ENCODE measurements at regions of chr5 and their contacts with region 1.

Region 1: DNA sequence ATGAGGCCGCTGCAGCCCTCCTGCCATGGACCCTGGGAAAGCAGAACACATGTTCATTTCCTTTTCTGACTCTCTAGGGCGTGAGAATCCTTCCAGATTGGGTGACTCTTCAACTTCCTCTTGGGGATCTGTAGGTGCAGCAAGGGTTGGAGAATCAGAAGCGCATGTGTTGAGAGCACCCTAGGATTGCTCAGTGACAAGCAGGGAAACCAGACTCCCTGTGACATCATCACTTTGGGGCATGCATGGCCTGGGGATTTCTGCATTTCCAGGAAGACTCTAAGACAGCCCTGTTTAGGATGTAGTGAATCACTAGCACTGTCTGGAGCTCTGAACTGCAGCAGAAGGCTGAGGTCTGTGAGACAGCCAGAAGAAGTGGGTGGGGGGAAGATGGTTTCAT is 15.1 kb upstream of the LCP2 start:
- DNase-seq: peak in 8 of 14 experiments; percentile 44 to 92 (median 61)
- ATAC-seq: peak; percentile 87
- H3K4me3 ChIP-seq: peak overlapping the region; percentile 6
- H3K4me3 Mint-ChIP-seq: peak overlapping the region; percentile 71
- H3K27ac ChIP-seq: peak overlapping the region; percentile 80 to 83
- H3K27ac Mint-ChIP-seq: peak overlapping the region; percentile 91
- H3K4me1 ChIP-seq: peaks cover 56% of the 10 kb centered on the region
- H3K4me1 Mint-ChIP-seq: peaks cover 87% of the 10 kb centered on the region
- H3K27me3 ChIP-seq: no peaks in the 10 kb centered on the region
- H3K27me3 Mint-ChIP-seq: no peaks in the 10 kb centered on the region
- CTCF ChIP-seq: no peak

Region 2: DNA sequence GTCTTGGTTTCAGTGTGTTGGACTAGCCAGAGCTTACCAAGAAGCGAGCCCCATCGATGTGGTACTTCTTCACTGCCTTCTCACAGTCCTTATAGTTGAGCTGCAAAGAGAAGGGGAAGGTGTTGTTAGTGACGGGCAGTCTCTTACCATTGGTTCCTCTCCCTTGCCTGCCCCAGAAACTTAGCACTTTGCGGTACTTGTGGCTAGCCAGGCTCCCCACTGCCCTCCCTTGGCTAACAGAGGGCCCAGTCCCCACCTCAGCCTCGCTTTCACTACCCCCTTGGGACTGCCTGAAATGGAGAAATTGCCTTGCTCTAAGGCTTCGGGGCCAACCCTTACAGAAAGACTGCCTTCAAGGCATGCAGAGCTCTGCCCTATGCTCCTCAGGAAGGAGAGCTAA is 19.4 kb before region 1 on chr5:
- CTCF ChIA-PET with region 1: interaction called, 8 read pairs
- POLR2A ChIA-PET with region 1: interaction called, 53 read pairs
- intact Hi-C with region 1: no loop called
- DNase-seq: peak in 5 of 14 experiments; percentile 39 to 83 (median 74)
- ATAC-seq: peak; percentile 10
- H3K4me3 ChIP-seq: peak overlapping the region; percentile 66
- H3K4me3 Mint-ChIP-seq: peak overlapping the region; percentile 98
- H3K27ac ChIP-seq: peak overlapping the region; percentile 49 to 98
- H3K27ac Mint-ChIP-seq: peak overlapping the region; percentile 96
- H3K4me1 ChIP-seq: peaks cover 66% of the 10 kb centered on the region
- H3K4me1 Mint-ChIP-seq: peaks cover 82% of the 10 kb centered on the region
- H3K27me3 ChIP-seq: no peaks in the 10 kb centered on the region
- H3K27me3 Mint-ChIP-seq: no peaks in the 10 kb centered on the region
- CTCF ChIP-seq: no peak

Region 3: DNA sequence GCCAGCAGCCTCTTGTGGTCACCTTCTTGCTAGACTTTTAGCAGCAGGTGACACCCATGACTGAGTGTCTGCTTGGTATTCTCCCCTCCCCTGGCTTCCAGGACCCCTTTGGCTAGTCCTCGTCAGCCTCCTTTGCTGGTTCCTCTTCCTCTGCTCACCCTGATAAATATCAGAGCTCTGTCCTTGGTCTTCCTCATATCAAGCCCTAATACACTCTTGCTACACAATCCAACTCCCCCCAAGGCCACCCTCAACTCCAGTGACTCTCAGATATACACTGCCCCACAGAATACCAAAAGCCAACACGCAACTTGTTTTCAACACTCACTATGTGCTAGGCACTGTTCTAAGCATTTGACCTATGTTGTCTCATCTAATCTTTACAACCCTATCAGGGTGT is 15.2 kb after region 1 on chr5:
- CTCF ChIA-PET with region 1: interaction called, 3 read pairs
- POLR2A ChIA-PET with region 1: interaction called, 50 read pairs
- intact Hi-C with region 1: loop called (anchors 1 to 2 kb)
- DNase-seq: no peak
- ATAC-seq: no peak
- H3K4me3 ChIP-seq: no peak overlapping the region
- H3K4me3 Mint-ChIP-seq: no peak overlapping the region
- H3K27ac ChIP-seq: no peak overlapping the region
- H3K27ac Mint-ChIP-seq: no peak overlapping the region
- H3K4me1 ChIP-seq: peaks cover 55% of the 10 kb centered on the region
- H3K4me1 Mint-ChIP-seq: peaks cover 23% of the 10 kb centered on the region
- H3K27me3 ChIP-seq: no peaks in the 10 kb centered on the region
- H3K27me3 Mint-ChIP-seq: no peaks in the 10 kb centered on the region
- CTCF ChIP-seq: no peak

Region 4: DNA sequence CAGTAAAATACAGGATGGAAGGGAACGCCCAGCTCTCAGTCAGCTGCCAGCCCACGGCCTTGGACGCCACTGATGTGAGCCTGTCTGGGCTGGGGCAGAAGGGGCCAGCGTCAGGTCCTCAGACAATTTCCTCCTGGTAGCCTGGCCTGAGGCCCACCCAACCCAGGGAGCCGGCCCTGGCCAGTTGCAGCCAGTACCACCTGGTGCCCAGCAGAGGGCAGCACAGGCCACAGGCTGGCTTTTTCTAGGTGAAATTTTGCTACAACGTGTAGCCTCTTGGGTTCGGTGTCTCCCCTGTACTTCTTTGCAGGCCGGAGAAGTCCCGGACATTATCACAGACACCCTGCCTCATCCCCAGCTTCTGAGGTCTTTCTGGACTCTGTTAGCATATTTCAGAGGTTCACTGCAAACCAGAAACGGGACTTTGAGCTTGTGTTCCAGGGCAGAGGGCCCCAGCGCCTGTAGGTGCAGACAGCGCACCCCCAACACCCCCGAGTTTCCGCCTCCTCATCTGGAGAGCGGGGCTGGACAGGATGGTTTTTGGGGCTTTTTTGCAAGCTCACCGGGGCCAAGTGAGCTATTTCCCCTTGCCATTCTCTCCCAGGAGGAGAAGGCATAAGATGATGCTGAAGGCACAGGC is 122.4 kb after region 1 on chr5:
- CTCF ChIA-PET with region 1: no interaction called
- POLR2A ChIA-PET with region 1: no interaction called
- intact Hi-C with region 1: no loop called
- DNase-seq: peak in 13 of 14 experiments; percentile 35 to 75 (median 43)
- ATAC-seq: peak; percentile 63
- H3K4me3 ChIP-seq: no peak overlapping the region
- H3K4me3 Mint-ChIP-seq: no peak overlapping the region
- H3K27ac ChIP-seq: no peak overlapping the region
- H3K27ac Mint-ChIP-seq: no peak overlapping the region
- H3K4me1 ChIP-seq: peaks cover 4% of the 10 kb centered on the region
- H3K4me1 Mint-ChIP-seq: no peaks in the 10 kb centered on the region
- H3K27me3 ChIP-seq: no peaks in the 10 kb centered on the region
- H3K27me3 Mint-ChIP-seq: no peaks in the 10 kb centered on the region
- CTCF ChIP-seq: peak; percentile 82